ENCODE measurements at regions of chr1 and their contacts with region 1.

Region 1: GRCh38 chr1:54944610-54945544 is 35.6 kb upstream of the TMEM61 start:
- DNase-seq: peak in 1 of 2 donors; percentile 85
- H3K4me3 ChIP-seq: peak overlapping the region; percentile 31 to 40
- H3K27ac ChIP-seq: no peak overlapping the region
- H3K4me1 ChIP-seq: no peaks in the 10 kb centered on the region
- H3K27me3 ChIP-seq: no peaks in the 10 kb centered on the region
- CTCF ChIP-seq: peak; percentile 76 to 85 (median 77)

Region 2: GRCh38 chr1:54886724-54887664 is 57.9 kb before region 1 on chr1 and contains the start of gene DHCR24:
- intact Hi-C with region 1: loop called (anchors 5 kb)
- DNase-seq: peak; percentile 34 to 87
- H3K4me3 ChIP-seq: peak within 1 kb of the TSS; percentile 81 to 90
- H3K27ac ChIP-seq: peak within 1 kb of the TSS; percentile 31 to 58
- H3K4me1 ChIP-seq: peaks cover 0 to 5% of the 10 kb centered on the region in 2 donors
- H3K27me3 ChIP-seq: no peaks in the 10 kb centered on the region
- CTCF ChIP-seq: no peak
- total RNA-seq, gene DHCR24: 16.6 TPM

Region 3: DNA sequence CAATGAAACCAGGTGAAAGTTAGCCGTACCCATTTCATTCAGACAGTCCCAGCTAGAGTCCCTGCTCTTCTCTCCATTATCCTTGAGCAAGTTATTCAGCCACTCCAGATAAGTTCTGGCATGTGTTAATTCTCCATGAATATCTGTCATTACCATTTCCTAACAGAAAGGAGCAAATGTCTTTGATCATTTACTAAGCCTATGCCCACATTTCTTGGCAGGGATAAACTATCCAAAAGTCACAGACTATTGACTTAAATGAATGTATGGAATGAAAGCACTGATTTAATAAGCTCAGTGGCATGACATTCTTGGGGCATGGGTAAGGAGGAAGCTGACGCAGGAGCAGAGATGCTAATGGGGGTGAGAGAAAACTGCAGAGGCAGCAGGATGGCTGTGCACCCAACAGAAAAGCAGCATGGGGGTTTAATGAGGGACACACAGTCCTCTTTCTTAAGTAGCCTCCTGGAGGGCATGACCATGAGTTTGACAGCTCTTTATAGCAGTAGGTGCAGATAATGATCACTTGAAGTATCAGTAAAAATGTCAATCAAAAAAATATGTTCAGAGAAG is 40.3 kb before region 1 on chr1:
- intact Hi-C with region 1: no loop called
- DNase-seq: no peak
- H3K4me3 ChIP-seq: no peak overlapping the region
- H3K27ac ChIP-seq: no peak overlapping the region
- H3K4me1 ChIP-seq: no peaks in the 10 kb centered on the region
- H3K27me3 ChIP-seq: no peaks in the 10 kb centered on the region
- CTCF ChIP-seq: no peak

Region 4: DNA sequence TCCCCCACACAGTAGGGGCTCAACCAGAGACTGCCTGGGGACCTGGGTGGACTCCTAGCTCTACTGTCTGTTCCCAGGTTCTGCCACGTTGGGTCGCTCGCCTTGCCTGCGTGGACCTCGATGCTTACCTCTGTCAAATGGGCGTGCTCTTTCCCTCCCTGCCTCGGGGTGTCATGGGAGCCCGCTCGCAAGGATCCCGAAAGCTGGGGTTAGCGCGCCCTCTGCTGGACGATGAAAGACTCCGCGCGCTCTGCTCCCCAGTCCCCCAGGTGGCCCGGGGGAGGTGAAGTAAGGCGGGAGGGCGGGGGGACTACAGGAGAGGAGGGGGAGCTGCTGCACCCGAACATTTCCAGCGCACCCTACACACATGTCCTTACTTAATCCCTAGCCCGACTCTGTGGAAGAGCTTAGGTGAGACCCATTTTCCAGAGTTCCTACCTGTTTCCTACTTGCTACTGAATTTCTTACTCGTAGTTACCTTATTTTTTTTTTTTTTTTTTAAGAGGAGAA is 51.5 kb after region 1 on chr1:
- intact Hi-C with region 1: loop called (anchors 1 kb)
- DNase-seq: peak in 1 of 2 donors; percentile 76
- H3K4me3 ChIP-seq: peak overlapping the region; percentile 0 to 16
- H3K27ac ChIP-seq: no peak overlapping the region
- H3K4me1 ChIP-seq: peaks cover 0 to 7% of the 10 kb centered on the region in 2 donors
- H3K27me3 ChIP-seq: no peaks in the 10 kb centered on the region
- CTCF ChIP-seq: peak; percentile 77 to 92 (median 90)

Region 5: GRCh38 chr1:55021965-55022546 is 77.2 kb after region 1 on chr1:
- intact Hi-C with region 1: loop called (anchors 1 kb)
- DNase-seq: peak in 1 of 2 donors; percentile 88
- H3K4me3 ChIP-seq: no peak overlapping the region
- H3K27ac ChIP-seq: no peak overlapping the region
- H3K4me1 ChIP-seq: no peaks in the 10 kb centered on the region
- H3K27me3 ChIP-seq: no peaks in the 10 kb centered on the region
- CTCF ChIP-seq: peak; percentile 80 to 87 (median 83)